Activated CD8-positive, alpha-beta memory T cell treated with anti-CD3 and anti-CD28 coated beads, Interleukin-2, amount 10 ng/mL, durations not matched to agents 7 days and 5 days (primary cell): ENCODE measurements at regions of chr10 and their contacts with region 1.

Region 1: GRCh38 chr10:102583435-102584417 is 60.6 kb upstream of the TRIM8 start:
- DNase-seq: peak; percentile 91
- ATAC-seq: peak; percentile 98
- H3K4me3 Mint-ChIP-seq: no peak overlapping the region
- H3K27ac Mint-ChIP-seq: no peak overlapping the region
- H3K4me1 Mint-ChIP-seq: peaks cover 5% of the 10 kb centered on the region
- H3K27me3 Mint-ChIP-seq: no peaks in the 10 kb centered on the region

Region 2: GRCh38 chr10:102167861-102168260 is 415.9 kb before region 1 on chr10:
- CTCF ChIA-PET with region 1: interaction called, 15 read pairs
- DNase-seq: no peak
- ATAC-seq: no peak
- H3K4me3 Mint-ChIP-seq: no peak overlapping the region
- H3K27ac Mint-ChIP-seq: no peak overlapping the region
- H3K4me1 Mint-ChIP-seq: peaks cover 15% of the 10 kb centered on the region
- H3K27me3 Mint-ChIP-seq: no peaks in the 10 kb centered on the region

Region 3: GRCh38 chr10:102334101-102334500 is 249.6 kb before region 1 on chr10:
- CTCF ChIA-PET with region 1: no interaction called
- DNase-seq: no peak
- ATAC-seq: no peak
- H3K4me3 Mint-ChIP-seq: no peak overlapping the region
- H3K27ac Mint-ChIP-seq: no peak overlapping the region
- H3K4me1 Mint-ChIP-seq: peaks cover 10% of the 10 kb centered on the region
- H3K27me3 Mint-ChIP-seq: no peaks in the 10 kb centered on the region

Region 4: DNA sequence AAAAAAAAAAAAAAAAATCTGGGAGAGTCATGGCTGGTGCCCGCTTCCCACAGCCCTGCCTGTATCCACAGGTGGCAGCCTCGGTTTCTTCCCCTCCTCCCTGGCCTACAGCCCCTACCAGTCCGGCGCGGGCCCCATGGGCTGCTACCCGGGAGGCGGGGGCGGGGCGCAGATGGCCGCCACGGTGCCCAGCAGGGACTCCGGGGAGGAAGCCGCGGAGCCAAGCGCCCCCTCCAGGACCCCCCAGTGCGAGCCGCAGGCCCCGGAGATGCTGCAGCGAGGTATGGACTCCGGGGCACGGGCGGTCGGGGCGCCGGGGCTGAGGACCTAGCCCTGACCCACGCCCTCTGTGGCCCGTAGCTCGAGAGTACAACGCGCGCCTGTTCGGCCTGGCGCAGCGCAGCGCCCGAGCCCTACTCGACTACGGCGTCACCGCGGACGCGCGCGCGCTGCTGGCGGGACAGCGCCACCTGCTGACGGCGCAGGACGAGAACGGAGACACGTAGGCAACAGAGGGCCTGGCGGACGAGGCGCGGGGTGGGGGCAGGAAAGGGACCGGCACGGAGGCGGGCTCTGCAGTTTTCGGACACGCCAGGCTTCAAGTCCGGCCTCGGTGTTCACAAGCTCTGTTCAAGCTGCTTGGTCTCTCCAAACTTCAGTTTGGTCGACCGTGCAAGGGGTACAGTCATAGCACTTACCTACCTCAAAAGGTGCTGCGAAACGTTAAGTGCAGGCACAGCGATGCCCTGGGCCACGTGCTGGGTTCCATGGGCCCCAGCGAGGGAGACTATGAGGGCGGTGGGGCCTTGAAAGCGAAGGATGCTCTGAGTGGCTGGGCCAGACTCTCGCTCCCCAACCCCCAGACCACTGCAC is 184.3 kb before region 1 on chr10:
- CTCF ChIA-PET with region 1: interaction called, 12 read pairs
- DNase-seq: peak; percentile 92
- ATAC-seq: peak; percentile 66
- H3K4me3 Mint-ChIP-seq: peak overlapping the region; percentile 52
- H3K27ac Mint-ChIP-seq: peak overlapping the region; percentile 59
- H3K4me1 Mint-ChIP-seq: peaks cover 36% of the 10 kb centered on the region
- H3K27me3 Mint-ChIP-seq: no peaks in the 10 kb centered on the region

Region 5: DNA sequence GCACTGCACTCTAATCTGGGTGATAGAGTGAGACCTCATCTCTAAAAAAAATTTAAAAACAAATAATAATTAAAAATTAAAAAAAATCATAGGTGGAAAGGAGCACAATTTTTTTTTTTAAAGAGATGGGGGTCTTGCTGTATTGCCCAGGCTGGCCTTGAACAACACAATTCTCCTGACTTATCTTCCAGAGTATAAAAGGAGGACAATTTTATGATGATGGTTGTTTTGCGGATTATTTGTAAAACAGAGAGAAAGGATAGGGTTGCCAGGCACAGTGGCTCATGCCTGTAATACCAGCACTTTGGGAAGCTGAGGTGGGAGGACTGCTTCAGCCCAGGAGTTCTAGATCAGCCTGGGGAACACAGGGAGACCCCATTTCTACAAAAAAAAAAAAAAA is 86.2 kb before region 1 on chr10:
- CTCF ChIA-PET with region 1: interaction called, 138 read pairs
- DNase-seq: no peak
- ATAC-seq: no peak
- H3K4me3 Mint-ChIP-seq: no peak overlapping the region
- H3K27ac Mint-ChIP-seq: no peak overlapping the region
- H3K4me1 Mint-ChIP-seq: peaks cover 24% of the 10 kb centered on the region
- H3K27me3 Mint-ChIP-seq: no peaks in the 10 kb centered on the region

Region 6: GRCh38 chr10:102511583-102512274 is 72.0 kb before region 1 on chr10:
- CTCF ChIA-PET with region 1: interaction called, 138 read pairs
- DNase-seq: no peak
- ATAC-seq: peak; percentile 60
- H3K4me3 Mint-ChIP-seq: no peak overlapping the region
- H3K27ac Mint-ChIP-seq: peak overlapping the region; percentile 39
- H3K4me1 Mint-ChIP-seq: peaks cover 19% of the 10 kb centered on the region
- H3K27me3 Mint-ChIP-seq: no peaks in the 10 kb centered on the region

Region 7: DNA sequence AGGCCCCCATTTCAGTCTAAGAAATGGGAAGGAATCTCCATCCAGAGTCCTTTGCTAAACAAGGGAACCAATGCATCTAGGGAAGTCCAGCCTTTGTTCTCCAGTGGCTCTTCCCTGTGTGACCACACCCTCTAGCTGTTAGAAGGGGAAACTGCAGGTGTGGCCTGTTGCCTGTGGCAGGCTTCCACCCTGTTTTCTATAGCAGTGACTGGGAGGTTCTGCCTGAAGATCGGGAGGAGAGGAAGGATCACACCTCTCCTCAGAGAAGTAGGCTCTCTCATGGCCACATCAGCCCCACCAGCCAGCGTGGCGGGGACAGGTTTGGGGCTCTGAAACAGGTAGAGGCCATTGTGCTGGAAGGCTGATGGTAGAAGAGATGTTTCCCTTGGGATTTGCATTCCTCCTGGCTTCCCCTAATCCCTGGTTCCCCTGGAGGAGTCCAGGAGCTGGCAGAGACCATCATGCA is 12.8 kb after region 1 on chr10:
- CTCF ChIA-PET with region 1: interaction called, 18 read pairs
- DNase-seq: peak; percentile 57
- ATAC-seq: peak; percentile 49
- H3K4me3 Mint-ChIP-seq: no peak overlapping the region
- H3K27ac Mint-ChIP-seq: no peak overlapping the region
- H3K4me1 Mint-ChIP-seq: no peaks in the 10 kb centered on the region
- H3K27me3 Mint-ChIP-seq: no peaks in the 10 kb centered on the region